PC-3 (cell line): ENCODE measurements at regions of chr7 and their contacts with region 1.

Region 1: DNA sequence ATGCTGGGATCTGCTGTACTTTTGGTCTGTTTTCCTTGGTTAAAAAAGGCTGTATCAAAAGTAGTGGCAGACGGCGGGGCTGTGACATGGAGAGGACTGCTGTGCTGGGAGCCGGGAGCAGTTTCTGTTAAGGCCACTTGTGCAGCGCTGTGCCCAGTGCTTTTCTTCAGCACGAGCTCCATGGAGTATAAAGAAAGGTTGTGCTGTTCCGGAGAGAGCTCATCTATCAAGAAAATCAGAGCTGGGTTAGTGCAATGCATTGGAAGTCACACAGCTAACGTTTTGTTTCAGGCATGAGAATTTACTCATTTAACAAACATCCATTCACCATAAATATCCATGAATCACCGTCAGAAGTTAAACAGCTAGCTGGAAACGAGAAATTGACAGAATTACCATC is 62.0 kb downstream of the KIAA1549 start:
- DNase-seq: peak; percentile 83
- ATAC-seq: peak; percentile 93
- H3K4me3 ChIP-seq: no peak overlapping the region
- H3K27ac ChIP-seq: peak overlapping the region; percentile 92
- H3K4me1 ChIP-seq: peaks cover 19% of the 10 kb centered on the region
- H3K27me3 ChIP-seq: no peaks in the 10 kb centered on the region
- CTCF ChIP-seq: no peak

Region 2: DNA sequence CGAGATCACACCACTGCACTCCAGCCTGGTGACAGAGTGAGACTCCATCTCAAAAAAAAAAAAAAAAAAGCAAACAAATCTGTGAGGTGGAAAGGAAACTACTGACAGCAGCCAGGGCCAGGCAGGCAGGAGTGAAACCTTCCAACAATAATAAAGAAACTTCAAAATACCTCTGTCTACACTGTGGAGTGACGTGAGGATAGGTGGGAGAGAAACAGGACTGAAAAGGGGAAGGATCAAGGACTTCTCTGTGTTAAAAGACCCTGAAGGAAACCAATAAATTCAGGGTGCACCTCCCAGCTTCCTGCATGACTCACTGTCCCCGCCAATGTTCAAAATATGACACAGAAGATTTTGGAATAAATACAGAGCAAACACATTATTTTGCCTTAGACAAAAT is 21.0 kb before region 1 on chr7:
- CTCF ChIA-PET with region 1: interaction called, 3 read pairs
- POLR2A ChIA-PET with region 1: no interaction called
- intact Hi-C with region 1: loop called (anchors 2 kb)
- DNase-seq: peak; percentile 84
- ATAC-seq: peak; percentile 65
- H3K4me3 ChIP-seq: no peak overlapping the region
- H3K27ac ChIP-seq: peak overlapping the region; percentile 99
- H3K4me1 ChIP-seq: peaks cover 74% of the 10 kb centered on the region
- H3K27me3 ChIP-seq: no peaks in the 10 kb centered on the region
- CTCF ChIP-seq: no peak

Region 3: DNA sequence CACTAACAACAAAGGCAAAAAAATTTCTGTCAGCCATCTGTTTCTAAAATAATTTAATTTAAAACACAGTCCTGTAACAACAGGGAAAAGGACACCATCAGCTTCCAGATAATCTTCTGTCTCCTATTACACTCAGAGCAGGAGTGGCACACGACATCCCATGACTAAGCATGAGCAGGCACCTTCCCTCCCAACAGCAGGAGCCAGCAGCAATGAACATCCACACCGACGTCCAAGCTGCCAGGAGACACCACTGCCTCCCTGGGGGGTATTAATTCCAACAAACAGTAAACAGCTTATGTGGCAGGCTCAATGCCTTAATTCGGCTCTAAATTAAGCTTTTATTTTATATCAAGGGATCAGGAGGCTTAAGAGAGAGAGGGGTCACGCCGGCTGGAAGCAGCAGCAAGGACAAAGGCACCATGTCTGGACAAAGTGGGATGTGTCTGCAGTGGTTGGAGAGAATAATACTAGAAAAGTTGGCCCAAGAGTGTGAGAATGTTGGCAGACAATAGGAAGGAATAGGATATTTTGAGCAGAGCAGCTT is 16.3 kb after region 1 on chr7:
- CTCF ChIA-PET with region 1: interaction called, 3 read pairs
- POLR2A ChIA-PET with region 1: interaction called, 14 read pairs
- intact Hi-C with region 1: loop called (anchors 1 kb)
- DNase-seq: peak; percentile 92
- ATAC-seq: peak; percentile 93
- H3K4me3 ChIP-seq: peak overlapping the region; percentile 49; the same call in 1 of the 2 replicates
- H3K27ac ChIP-seq: peak overlapping the region; percentile 91
- H3K4me1 ChIP-seq: peaks cover 32% of the 10 kb centered on the region
- H3K27me3 ChIP-seq: no peaks in the 10 kb centered on the region
- CTCF ChIP-seq: no peak

Region 4: DNA sequence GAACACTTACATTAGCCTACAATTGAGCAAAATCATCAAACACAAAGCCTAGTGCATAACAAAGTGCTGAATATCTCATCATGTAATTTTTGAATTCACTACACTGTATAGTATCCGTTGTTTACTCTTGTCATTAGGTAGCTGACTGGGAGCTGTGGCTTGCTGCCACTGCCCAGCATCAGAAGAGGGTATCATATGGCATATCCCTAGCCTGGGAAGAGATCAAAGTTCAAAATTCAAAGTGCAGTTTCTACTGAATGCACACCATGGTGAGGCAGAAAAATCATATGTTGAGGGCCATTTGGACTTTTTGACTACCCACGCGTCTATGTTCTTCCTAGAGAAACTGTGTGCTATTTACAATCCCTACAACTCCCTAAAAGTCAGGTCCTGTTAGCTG is 197.8 kb after region 1 on chr7:
- CTCF ChIA-PET with region 1: interaction called, 18 read pairs
- POLR2A ChIA-PET with region 1: no interaction called
- intact Hi-C with region 1: no loop called
- DNase-seq: peak; percentile 11
- ATAC-seq: peak; percentile 27
- H3K4me3 ChIP-seq: no peak overlapping the region
- H3K27ac ChIP-seq: no peak overlapping the region
- H3K4me1 ChIP-seq: peaks cover 22% of the 10 kb centered on the region
- H3K27me3 ChIP-seq: no peaks in the 10 kb centered on the region
- CTCF ChIP-seq: no peak